ENCODE measurements at regions of chr19 and their contacts with region 1.

Region 1: DNA sequence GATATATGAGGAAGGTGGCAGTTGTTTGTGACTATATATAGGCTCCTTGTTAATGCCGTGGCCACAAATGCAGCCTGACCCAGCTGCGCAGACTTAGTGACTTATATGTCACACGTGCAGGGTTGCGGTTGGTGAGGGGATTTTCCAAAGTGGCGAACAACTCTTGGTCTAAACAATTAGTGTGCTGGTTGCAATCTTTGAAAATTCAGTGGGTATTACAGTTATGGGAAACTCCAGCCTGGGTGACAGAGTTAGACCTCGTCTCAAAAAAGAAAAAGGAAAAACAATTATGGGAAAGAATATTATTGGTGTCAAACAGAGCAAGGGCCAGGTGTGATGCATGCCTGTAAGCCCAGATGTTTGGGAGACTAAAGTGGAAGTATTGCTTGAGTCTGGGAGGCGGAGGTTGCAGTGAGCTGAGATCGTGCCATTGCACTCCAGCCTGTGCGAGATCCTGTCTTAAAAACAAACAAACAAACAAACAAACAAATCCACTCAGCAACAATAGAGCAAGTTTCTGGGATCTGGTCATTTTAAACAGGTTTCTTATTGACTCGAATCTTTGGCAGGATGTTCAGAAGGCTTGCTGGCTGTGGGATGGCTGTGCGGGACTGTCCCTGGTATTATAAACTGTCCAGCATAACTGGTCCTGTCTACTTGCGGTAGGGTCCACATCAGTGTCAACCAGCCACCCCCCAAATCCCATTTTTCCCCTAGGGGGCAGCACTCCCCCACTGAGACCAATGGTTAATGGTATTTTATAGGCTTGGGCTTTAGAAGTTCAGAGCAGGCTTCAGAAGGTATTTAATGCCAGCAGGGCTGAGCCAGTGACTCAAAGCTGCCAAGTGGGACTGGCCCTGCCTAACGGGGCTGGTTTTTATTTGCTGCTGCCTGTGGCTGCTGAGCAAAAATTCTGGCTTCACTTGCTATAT is 15.4 kb downstream of the RELB start:
- DNase-seq: peak; percentile 89
- ATAC-seq: peak; percentile 79
- H3K4me3 ChIP-seq: peak overlapping the region in 2 of 5 experiments; percentile 26 to 33
- H3K4me3 Mint-ChIP-seq: peak overlapping the region; percentile 81
- H3K27ac ChIP-seq: peak overlapping the region; percentile 84 to 93
- H3K27ac Mint-ChIP-seq: peak overlapping the region; percentile 94
- H3K4me1 ChIP-seq: peaks cover 7 to 26% of the 10 kb centered on the region in 2 donors
- H3K4me1 Mint-ChIP-seq: peaks cover 18% of the 10 kb centered on the region
- H3K27me3 ChIP-seq: no peaks in the 10 kb centered on the region
- H3K27me3 Mint-ChIP-seq: no peaks in the 10 kb centered on the region
- CTCF ChIP-seq: peak; percentile 70

Region 2: GRCh38 chr19:44890366-44891015 is 126.2 kb before region 1 on chr19:
- CTCF ChIA-PET with region 1: no interaction called
- POLR2A ChIA-PET with region 1: no interaction called
- intact Hi-C with region 1: no loop called
- DNase-seq: peak; percentile 100
- ATAC-seq: peak; percentile 78
- H3K4me3 ChIP-seq: peak overlapping the region; percentile 65 to 90 (median 73)
- H3K4me3 Mint-ChIP-seq: peak overlapping the region; percentile 92
- H3K27ac ChIP-seq: peak overlapping the region; percentile 87 to 98
- H3K27ac Mint-ChIP-seq: peak overlapping the region; percentile 94
- H3K4me1 ChIP-seq: peaks cover 16 to 21% of the 10 kb centered on the region in 2 donors
- H3K4me1 Mint-ChIP-seq: peaks cover 29% of the 10 kb centered on the region
- H3K27me3 ChIP-seq: no peaks in the 10 kb centered on the region
- H3K27me3 Mint-ChIP-seq: no peaks in the 10 kb centered on the region
- CTCF ChIP-seq: no peak

Region 3: GRCh38 chr19:44972802-44973201 is 43.9 kb before region 1 on chr19:
- CTCF ChIA-PET with region 1: no interaction called
- POLR2A ChIA-PET with region 1: interaction called, 10 read pairs
- intact Hi-C with region 1: no loop called
- DNase-seq: no peak
- ATAC-seq: no peak
- H3K4me3 ChIP-seq: no peak overlapping the region
- H3K4me3 Mint-ChIP-seq: no peak overlapping the region
- H3K27ac ChIP-seq: no peak overlapping the region
- H3K27ac Mint-ChIP-seq: no peak overlapping the region
- H3K4me1 ChIP-seq: peaks cover 4 to 12% of the 10 kb centered on the region in 2 donors
- H3K4me1 Mint-ChIP-seq: peaks cover 6% of the 10 kb centered on the region
- H3K27me3 ChIP-seq: no peaks in the 10 kb centered on the region
- H3K27me3 Mint-ChIP-seq: no peaks in the 10 kb centered on the region
- CTCF ChIP-seq: no peak

Region 4: DNA sequence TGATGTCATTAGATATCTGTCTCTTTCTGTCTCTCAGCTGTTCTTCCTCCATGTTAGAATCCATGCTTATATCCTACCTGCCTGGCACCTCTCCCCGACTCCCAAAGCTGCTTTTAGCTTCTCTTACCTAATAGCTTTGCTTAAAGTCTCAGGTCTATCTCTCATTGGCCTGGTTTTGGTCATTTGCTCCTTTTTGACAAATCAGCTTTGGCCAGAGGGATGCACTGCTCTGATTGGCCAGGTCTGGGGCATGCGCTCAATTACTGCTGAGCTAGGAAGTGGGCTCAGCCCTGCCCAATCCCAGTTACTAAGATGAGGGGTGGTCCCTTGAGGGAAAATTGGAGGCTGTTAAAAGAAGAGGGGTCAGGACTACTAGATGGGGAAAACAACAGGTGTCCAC is 10.7 kb after region 1 on chr19:
- CTCF ChIA-PET with region 1: interaction called, 14 read pairs
- POLR2A ChIA-PET with region 1: no interaction called
- intact Hi-C with region 1: no loop called
- DNase-seq: no peak
- ATAC-seq: no peak
- H3K4me3 ChIP-seq: no peak overlapping the region
- H3K4me3 Mint-ChIP-seq: no peak overlapping the region
- H3K27ac ChIP-seq: no peak overlapping the region
- H3K27ac Mint-ChIP-seq: no peak overlapping the region
- H3K4me1 ChIP-seq: no peaks in the 10 kb centered on the region
- H3K4me1 Mint-ChIP-seq: peaks cover 2% of the 10 kb centered on the region
- H3K27me3 ChIP-seq: no peaks in the 10 kb centered on the region
- H3K27me3 Mint-ChIP-seq: no peaks in the 10 kb centered on the region
- CTCF ChIP-seq: no peak

Region 5: DNA sequence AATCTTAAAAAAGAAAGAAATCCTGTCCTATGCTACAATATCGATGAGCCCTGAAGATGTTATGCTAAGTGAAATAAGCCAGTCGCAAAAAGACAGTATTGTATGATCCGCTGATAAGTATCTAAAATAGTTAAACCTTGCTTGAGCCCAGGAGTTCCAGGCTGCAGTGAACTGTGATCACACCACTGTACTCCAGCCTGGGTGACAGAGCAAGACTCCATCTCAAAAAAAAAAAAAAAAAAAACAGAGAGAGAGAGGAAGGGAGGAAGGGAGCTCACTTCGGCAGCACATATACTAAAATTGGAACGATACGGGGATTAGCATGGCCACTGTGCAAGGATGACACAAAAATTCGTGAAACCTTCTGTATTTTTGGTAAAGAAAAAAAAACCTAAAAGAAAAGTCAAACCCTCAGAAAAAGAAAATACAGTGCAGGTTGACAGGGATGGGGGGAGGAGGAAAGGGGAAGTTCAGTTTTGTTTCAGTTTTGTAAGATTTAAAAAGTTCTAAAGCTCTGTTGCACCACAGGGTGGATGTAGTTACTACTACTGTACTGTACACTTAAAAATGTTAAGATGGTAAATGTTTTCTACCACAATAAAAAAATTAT is 30.6 kb after region 1 on chr19:
- CTCF ChIA-PET with region 1: interaction called, 15 read pairs
- POLR2A ChIA-PET with region 1: interaction called, 6 read pairs
- intact Hi-C with region 1: loop called (anchors 1 kb)
- DNase-seq: peak; percentile 81
- ATAC-seq: peak; percentile 46
- H3K4me3 ChIP-seq: peak overlapping the region; percentile 34 to 71 (median 51)
- H3K4me3 Mint-ChIP-seq: peak overlapping the region; percentile 90
- H3K27ac ChIP-seq: peak overlapping the region; percentile 61 to 78
- H3K27ac Mint-ChIP-seq: peak overlapping the region; percentile 89
- H3K4me1 ChIP-seq: peaks cover 65 to 69% of the 10 kb centered on the region in 2 donors
- H3K4me1 Mint-ChIP-seq: peaks cover 68% of the 10 kb centered on the region
- H3K27me3 ChIP-seq: no peaks in the 10 kb centered on the region
- H3K27me3 Mint-ChIP-seq: no peaks in the 10 kb centered on the region
- CTCF ChIP-seq: peak; percentile 43

Region 6: DNA sequence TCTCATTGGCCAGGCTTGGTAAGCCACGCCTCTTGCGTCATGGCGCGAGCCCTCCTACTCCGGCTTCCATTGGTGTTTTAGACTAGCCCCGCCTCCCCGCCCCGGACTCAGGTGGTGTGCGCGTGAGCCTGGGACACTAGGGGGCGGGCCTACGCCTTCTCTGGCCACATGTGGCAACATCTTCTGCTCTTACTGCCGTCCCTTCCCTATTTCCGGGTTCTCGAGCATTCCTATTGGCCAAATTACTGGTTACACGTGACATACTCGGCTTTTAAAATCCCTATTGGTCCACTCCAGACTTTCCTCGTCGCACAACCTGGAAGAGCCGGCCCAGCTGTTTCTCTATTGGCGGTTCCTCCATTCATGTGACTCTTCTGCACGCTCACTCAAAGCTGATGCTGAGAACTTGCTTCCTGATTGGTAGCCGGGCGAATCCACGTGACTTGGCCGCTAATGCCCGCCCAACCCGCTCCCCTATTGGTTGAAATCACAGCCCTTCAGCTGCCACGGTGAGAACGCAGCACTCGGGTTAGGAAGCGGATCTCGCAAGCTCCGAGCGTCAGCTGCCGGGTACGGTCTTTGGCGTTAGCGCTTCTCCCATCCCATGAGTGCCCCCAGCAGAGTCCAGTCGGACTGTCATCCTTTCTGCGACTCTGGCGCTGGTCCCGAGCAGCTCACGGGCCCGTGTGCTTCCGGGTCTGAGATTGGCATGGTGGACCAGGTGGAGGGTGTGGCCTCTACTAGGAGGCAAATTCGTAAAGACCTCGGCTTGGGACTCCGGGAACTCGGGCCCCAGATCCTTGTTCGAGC is 161.8 kb after region 1 on chr19 and contains the start of gene BLOC1S3:
- CTCF ChIA-PET with region 1: interaction called, 4 read pairs
- POLR2A ChIA-PET with region 1: interaction called, 3 read pairs
- intact Hi-C with region 1: loop called (anchors 1 kb)
- DNase-seq: peak; percentile 100
- ATAC-seq: peak; percentile 88
- H3K4me3 ChIP-seq: peak within 1 kb of the TSS; percentile 93 to 99 (median 95)
- H3K4me3 Mint-ChIP-seq: peak within 1 kb of the TSS; percentile 95
- H3K27ac ChIP-seq: peak within 1 kb of the TSS; percentile 86 to 91
- H3K27ac Mint-ChIP-seq: peak within 1 kb of the TSS; percentile 96
- H3K4me1 ChIP-seq: peaks cover 24 to 35% of the 10 kb centered on the region in 2 donors
- H3K4me1 Mint-ChIP-seq: peaks cover 39% of the 10 kb centered on the region
- H3K27me3 ChIP-seq: no peaks in the 10 kb centered on the region
- H3K27me3 Mint-ChIP-seq: no peaks in the 10 kb centered on the region
- CTCF ChIP-seq: peak; percentile 38
- total RNA-seq, gene BLOC1S3: 21.1 and 31.8 TPM in 2 replicates

Region 7: GRCh38 chr19:45927565-45928261 is 911.1 kb after region 1 on chr19:
- CTCF ChIA-PET with region 1: no interaction called
- POLR2A ChIA-PET with region 1: no interaction called
- intact Hi-C with region 1: no loop called
- DNase-seq: peak; percentile 93
- ATAC-seq: peak; percentile 99
- H3K4me3 ChIP-seq: no peak overlapping the region
- H3K4me3 Mint-ChIP-seq: peak overlapping the region; percentile 32
- H3K27ac ChIP-seq: no peak overlapping the region
- H3K27ac Mint-ChIP-seq: no peak overlapping the region
- H3K4me1 ChIP-seq: peaks cover 7 to 8% of the 10 kb centered on the region in 2 donors
- H3K4me1 Mint-ChIP-seq: peaks cover 8% of the 10 kb centered on the region
- H3K27me3 ChIP-seq: peaks cover 0 to 8% (median 1%) of the 10 kb centered on the region in 4 experiments
- H3K27me3 Mint-ChIP-seq: peaks cover 11% of the 10 kb centered on the region
- CTCF ChIP-seq: no peak

Measured in B cell (primary cell).